ENCODE measurements at regions of chr16 and their contacts with region 1.

Region 1: GRCh38 chr16:55257966-55258613 is 65.9 kb upstream of the IRX6 start:
- DNase-seq: peak; percentile 68 to 81 (median 74)
- ATAC-seq: peak; percentile 97
- H3K4me3 ChIP-seq: no peak overlapping the region
- H3K27ac ChIP-seq: no peak overlapping the region
- H3K4me1 ChIP-seq: no peaks in the 10 kb centered on the region; a peak in 1 of 5 replicates
- H3K27me3 ChIP-seq: peaks cover 2 to 4% of the 10 kb centered on the region in 2 experiments; a peak in 1 of 5 replicates
- CTCF ChIP-seq: peak; percentile 81 to 87 (median 85)
- EP300 ChIP-seq: no peak
- POLR2A ChIP-seq: no peak
- RAD21 ChIP-seq: peak; percentile 74 to 82

Region 2: GRCh38 chr16:54976651-54977200 is 281.4 kb before region 1 on chr16:
- CTCF ChIA-PET with region 1: no interaction called
- POLR2A ChIA-PET with region 1: no interaction called
- in situ Hi-C with region 1: no loop called
- intact Hi-C with region 1: no loop called
- DNase-seq: no peak
- ATAC-seq: no peak
- H3K4me3 ChIP-seq: no peak overlapping the region
- H3K27ac ChIP-seq: no peak overlapping the region
- H3K4me1 ChIP-seq: no peaks in the 10 kb centered on the region
- H3K27me3 ChIP-seq: peaks cover 12 to 45% of the 10 kb centered on the region in 2 experiments; a peak in 4 of 5 replicates
- CTCF ChIP-seq: no peak
- EP300 ChIP-seq: no peak
- POLR2A ChIP-seq: no peak
- RAD21 ChIP-seq: no peak

Region 3: DNA sequence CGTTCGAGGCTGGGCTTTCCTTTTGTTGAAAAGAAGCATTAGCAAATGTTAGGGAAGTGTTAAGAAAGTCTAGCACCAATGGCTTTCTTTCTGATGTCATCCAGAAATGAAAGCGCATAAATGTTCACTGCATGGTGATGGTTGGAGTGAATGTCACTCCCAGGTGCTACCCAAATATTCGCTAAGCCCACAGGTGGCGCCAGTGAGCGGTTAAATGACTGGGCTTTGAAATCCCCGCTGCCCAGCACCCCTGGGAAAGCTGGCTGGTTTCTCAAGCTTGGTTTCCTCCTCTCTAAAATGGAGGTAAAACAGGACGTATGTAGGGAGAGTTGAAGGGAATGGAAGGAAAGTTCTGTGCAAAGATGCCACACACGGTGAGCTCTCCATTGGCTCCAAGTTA is 223.1 kb before region 1 on chr16:
- CTCF ChIA-PET with region 1: no interaction called
- POLR2A ChIA-PET with region 1: no interaction called
- in situ Hi-C with region 1: no loop called
- intact Hi-C with region 1: loop called (anchors 1 kb)
- DNase-seq: peak; percentile 54 to 64 (median 63)
- ATAC-seq: peak; percentile 91
- H3K4me3 ChIP-seq: no peak overlapping the region
- H3K27ac ChIP-seq: no peak overlapping the region
- H3K4me1 ChIP-seq: no peaks in the 10 kb centered on the region
- H3K27me3 ChIP-seq: peaks cover 14 to 30% of the 10 kb centered on the region in 2 experiments; a peak in 4 of 5 replicates
- CTCF ChIP-seq: peak; percentile 64 to 74 (median 68)
- EP300 ChIP-seq: no peak
- POLR2A ChIP-seq: no peak
- RAD21 ChIP-seq: peak; percentile 18 to 55

Region 4: DNA sequence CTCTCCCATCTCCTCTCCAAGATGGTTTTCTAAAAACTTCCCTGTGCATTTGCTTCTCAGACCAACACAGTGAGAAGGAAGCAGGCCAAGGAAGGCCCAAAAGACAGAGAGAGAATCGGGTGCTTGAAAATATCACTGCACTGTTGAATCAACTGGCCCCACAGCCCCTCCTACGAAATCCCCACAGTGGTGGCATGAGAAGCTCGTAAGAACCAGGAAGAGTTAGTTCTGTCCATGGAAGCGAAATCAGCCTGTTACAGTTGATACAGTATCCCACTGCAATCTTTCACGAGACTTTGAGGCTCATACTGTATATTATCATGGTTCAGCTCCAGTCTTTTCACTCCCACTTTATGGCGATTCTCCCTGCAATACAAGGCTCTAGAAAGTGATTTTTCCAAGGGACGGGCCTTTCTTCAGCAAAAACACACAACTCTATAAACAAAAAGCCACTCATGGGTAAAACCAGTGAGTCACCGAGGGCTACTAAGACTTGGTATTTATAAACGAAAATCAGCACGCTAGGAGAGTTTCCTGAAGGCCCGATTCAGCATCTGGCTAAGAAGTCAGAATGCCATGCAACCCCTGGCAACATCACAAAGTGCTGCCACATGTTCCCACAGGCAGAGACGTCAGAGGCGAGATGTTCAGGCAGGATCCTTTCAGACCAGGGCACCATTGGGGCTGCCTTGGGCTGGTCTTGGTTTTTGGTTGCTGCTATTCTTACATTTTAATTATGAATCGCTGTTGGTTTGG is 141.7 kb before region 1 on chr16:
- CTCF ChIA-PET with region 1: no interaction called
- POLR2A ChIA-PET with region 1: no interaction called
- in situ Hi-C with region 1: no loop called
- intact Hi-C with region 1: loop called (anchors 10 kb)
- DNase-seq: no peak
- ATAC-seq: no peak
- H3K4me3 ChIP-seq: no peak overlapping the region
- H3K27ac ChIP-seq: no peak overlapping the region
- H3K4me1 ChIP-seq: no peaks in the 10 kb centered on the region
- H3K27me3 ChIP-seq: peaks cover 0 to 4% of the 10 kb centered on the region in 2 experiments; a peak in 2 of 5 replicates
- CTCF ChIP-seq: no peak
- EP300 ChIP-seq: no peak
- POLR2A ChIP-seq: no peak
- RAD21 ChIP-seq: no peak